ENCODE measurements at regions of chr3 and their contacts with region 1.

Region 1: DNA sequence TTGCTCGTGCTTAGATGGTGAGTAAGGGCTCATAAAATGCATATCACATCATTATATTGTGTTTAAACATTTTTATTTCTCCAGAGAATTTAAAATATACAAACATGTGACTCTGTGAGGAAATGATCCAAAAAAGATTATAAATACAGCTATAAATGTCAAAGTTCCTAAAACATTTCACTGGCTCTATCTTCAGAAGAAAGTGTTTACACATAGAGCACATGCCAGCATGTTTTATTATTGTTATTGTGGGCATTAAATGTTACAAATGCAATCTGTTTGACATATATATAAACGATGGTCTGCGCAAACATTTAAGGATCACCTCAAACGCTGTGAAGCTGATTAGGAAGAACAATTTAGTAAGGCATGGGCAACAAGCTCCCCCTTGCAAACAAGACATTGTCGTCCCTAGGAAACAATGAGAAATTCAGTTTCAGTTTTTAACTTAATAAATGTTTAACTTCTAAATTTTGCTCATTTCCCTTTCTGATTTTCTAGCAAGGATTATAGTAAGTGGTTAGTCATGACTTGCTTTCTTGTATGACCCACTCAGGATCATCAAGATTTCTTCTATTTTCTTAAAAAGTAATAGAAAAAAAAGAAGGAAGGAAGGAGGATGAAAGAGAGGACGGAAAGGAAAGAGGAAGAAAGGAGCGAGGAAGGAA is 207.5 kb downstream of the SATB1 start:
- DNase-seq: no peak
- H3K4me3 ChIP-seq: no peak overlapping the region
- H3K27ac ChIP-seq: no peak overlapping the region
- H3K4me1 ChIP-seq: no peaks in the 10 kb centered on the region
- H3K27me3 ChIP-seq: no peaks in the 10 kb centered on the region
- CTCF ChIP-seq: no peak

Region 2: DNA sequence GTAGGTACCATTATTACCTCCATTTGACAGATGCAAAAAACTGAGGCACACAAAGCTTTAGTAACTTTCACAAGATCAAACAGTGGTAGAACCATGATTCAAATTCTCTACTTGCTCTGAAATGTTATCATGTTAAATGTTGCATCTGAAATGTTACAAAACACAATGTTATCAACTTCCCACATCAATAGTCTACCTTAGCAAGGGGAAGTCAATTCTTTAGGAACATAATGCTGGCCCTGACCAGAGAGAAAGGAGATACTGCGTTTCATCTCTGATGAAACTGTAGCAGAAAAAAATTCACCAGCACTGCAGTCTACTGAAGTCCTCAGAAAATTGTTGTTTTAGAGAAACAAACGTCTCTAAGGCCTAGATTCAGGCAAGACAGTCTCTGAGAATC is 33.4 kb after region 1 on chr3:
- CTCF ChIA-PET with region 1: no interaction called
- POLR2A ChIA-PET with region 1: no interaction called
- intact Hi-C with region 1: loop called (anchors 2 kb)
- DNase-seq: no peak
- H3K4me3 ChIP-seq: no peak overlapping the region
- H3K27ac ChIP-seq: no peak overlapping the region
- H3K4me1 ChIP-seq: no peaks in the 10 kb centered on the region
- H3K27me3 ChIP-seq: no peaks in the 10 kb centered on the region
- CTCF ChIP-seq: no peak